Gastrocnemius medialis (tissue), 4 donors: ENCODE measurements at regions of chr9 and their contacts with region 1.

Region 1: GRCh38 chr9:22008736-22009562 is at the start of gene CDKN2B:
- DNase-seq: peak; percentile 88 to 94
- ATAC-seq: peak; percentile 91 to 93
- H3K4me3 ChIP-seq: peak within 1 kb of the TSS; percentile 68 to 87 (median 75)
- H3K27ac ChIP-seq: peak within 1 kb of the TSS; percentile 87 to 94 (median 88)
- H3K4me1 ChIP-seq: peaks cover 15% of the 10 kb centered on the region in 2 donors
- H3K27me3 ChIP-seq: peaks cover 0 to 24% (median 0%) of the 10 kb centered on the region in 3 donors
- CTCF ChIP-seq: peak; percentile 66 to 95 (median 90)
- POLR2A ChIP-seq: peak; percentile 62 to 89
- total RNA-seq, gene CDKN2B: 4.5 to 25.1 (median 15.6) TPM

Region 2: DNA sequence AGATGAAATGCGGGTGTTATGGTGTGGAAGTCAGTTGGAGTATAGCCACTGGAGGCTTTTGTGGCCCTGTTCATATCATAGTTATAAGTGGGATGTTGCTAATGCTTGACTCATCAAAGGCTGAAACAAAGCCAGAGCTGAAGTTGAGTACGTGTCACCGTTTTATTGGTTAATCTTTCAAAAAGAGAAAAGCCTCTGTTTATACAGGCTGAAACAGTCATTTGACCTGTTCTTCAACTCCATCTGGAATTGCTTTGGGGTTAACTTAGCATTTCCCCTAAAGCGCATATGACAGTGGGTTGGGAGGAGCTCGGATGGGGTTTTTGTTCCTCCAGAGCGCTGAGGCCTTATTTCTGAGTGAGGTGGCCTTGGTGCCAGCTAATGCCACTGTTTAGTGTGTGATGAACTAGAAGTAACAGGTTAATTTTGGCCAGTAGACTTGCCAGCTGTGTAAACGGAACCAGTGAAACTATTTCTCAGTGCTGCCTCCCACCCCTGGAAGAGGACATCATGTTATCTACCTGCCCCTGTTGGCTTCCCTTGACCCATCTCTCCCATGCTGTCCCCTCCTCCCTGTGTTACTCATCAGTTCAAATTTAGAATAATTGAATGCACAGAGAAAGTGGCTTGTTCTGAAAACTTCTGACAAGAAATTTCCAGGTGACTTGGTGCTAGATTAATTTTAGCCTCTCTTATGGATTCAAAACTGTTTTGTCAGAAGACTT is 172.3 kb before region 1 on chr9:
- in situ Hi-C with region 1: no loop called
- intact Hi-C with region 1: loop called (anchors 2 kb)
- DNase-seq: peak; percentile 25 to 49
- ATAC-seq: peak; percentile 87 to 95
- H3K4me3 ChIP-seq: no peak overlapping the region
- H3K27ac ChIP-seq: peak overlapping the region; percentile 74 to 84 (median 80)
- H3K4me1 ChIP-seq: peaks cover 17 to 37% of the 10 kb centered on the region in 2 donors
- H3K27me3 ChIP-seq: no peaks in the 10 kb centered on the region
- CTCF ChIP-seq: no peak
- POLR2A ChIP-seq: no peak

Region 3: GRCh38 chr9:22037954-22038690 is 29.2 kb after region 1 on chr9:
- in situ Hi-C with region 1: no loop called
- intact Hi-C with region 1: loop called (anchors 1 kb)
- DNase-seq: no peak
- ATAC-seq: peak; percentile 77 to 91
- H3K4me3 ChIP-seq: no peak overlapping the region
- H3K27ac ChIP-seq: peak overlapping the region; percentile 77 to 82 (median 80)
- H3K4me1 ChIP-seq: peaks cover 32 to 50% of the 10 kb centered on the region in 2 donors
- H3K27me3 ChIP-seq: no peaks in the 10 kb centered on the region
- CTCF ChIP-seq: peak in 4 of 5 experiments; percentile 29 to 58 (median 54)
- POLR2A ChIP-seq: no peak

Region 4: DNA sequence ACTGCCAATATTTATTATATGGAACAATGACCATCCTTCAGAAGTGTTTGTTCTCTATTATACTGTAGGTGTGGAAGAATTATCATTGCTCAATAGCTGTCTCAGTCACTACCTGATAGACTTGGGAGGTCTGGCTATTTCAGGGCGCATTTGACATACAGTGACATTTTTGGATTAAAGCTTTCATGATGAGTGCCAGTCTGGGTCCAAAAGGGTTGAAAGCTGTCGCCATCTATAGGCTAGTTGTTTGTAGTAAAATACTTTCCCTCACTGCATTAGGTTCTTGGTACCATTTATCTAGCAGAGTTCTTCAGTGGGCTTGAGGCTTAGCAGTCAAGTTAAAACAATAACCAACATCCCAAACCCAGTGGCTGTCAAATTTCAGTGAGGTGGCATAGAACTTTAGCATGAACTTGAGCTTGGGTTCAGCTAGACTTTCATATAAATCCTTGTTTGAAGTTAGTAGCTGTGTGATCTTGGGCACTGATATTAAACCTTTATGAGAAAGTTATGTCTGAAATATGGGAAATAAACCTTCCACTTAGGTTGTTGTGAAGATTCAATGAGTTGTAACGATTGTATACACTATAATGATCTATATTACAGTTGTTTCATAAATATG is 110.7 kb after region 1 on chr9:
- in situ Hi-C with region 1: loop called in 2 of 4 experiments (anchors 10 to 25 kb)
- intact Hi-C with region 1: loop called (anchors 1 kb)
- DNase-seq: no peak
- ATAC-seq: peak; percentile 58 to 89
- H3K4me3 ChIP-seq: no peak overlapping the region
- H3K27ac ChIP-seq: no peak overlapping the region
- H3K4me1 ChIP-seq: no peaks in the 10 kb centered on the region
- H3K27me3 ChIP-seq: no peaks in the 10 kb centered on the region
- CTCF ChIP-seq: peak; percentile 11 to 54 (median 34)
- POLR2A ChIP-seq: no peak